Activated B cell treated with CpG ODN at 0.5 μM for 24 hours (primary cell): ENCODE measurements at regions of chr4 and their contacts with region 1.

Region 1: DNA sequence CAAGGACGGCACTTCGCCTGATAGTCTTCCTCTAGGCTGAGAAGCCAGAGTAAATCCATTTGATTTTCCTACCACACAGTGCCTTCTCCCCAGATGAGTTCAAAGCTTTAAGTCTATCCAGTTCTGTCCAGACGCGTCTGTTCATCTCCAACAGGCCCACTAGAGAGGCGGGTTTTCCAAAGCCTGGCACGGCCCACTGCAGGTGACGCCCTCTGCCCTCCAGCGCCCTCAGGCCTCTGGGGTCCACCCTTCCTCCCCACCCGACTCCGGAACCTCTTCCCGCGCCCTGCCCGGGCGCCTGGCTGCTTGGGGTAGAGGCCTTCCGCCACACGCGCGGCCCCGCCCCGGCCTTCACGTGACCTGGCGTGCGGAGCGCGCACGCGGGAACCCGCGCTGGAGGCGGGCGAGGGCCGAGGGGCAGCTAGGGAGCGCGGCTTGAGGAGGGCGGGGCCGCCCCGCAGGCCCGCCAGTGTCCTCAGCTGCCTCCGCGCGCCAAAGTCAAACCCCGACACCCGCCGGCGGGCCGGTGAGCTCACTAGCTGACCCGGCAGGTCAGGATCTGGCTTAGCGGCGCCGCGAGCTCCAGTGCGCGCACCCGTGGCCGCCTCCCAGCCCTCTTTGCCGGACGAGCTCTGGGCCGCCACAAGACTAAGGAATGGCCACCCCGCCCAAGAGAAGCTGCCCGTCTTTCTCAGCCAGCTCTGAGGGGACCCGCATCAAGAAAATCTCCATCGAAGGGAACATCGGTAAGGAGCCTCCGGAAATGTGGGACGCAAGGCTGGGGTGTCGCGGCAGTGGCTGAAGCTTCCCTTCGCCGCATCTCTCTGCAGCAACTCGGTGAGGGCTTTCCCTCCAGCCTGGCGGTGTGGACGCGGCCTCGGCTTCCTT is at the start of gene DCK:
- DNase-seq: peak; percentile 91
- ATAC-seq: peak; percentile 81
- H3K4me3 Mint-ChIP-seq: peak within 1 kb of the TSS; percentile 94
- H3K27ac Mint-ChIP-seq: peak within 1 kb of the TSS; percentile 94
- H3K4me1 Mint-ChIP-seq: peaks cover 55% of the 10 kb centered on the region
- H3K27me3 Mint-ChIP-seq: no peaks in the 10 kb centered on the region
- CTCF ChIP-seq: no peak
- total RNA-seq, gene DCK: 32.6 and 34.3 TPM in 2 replicates

Region 2: DNA sequence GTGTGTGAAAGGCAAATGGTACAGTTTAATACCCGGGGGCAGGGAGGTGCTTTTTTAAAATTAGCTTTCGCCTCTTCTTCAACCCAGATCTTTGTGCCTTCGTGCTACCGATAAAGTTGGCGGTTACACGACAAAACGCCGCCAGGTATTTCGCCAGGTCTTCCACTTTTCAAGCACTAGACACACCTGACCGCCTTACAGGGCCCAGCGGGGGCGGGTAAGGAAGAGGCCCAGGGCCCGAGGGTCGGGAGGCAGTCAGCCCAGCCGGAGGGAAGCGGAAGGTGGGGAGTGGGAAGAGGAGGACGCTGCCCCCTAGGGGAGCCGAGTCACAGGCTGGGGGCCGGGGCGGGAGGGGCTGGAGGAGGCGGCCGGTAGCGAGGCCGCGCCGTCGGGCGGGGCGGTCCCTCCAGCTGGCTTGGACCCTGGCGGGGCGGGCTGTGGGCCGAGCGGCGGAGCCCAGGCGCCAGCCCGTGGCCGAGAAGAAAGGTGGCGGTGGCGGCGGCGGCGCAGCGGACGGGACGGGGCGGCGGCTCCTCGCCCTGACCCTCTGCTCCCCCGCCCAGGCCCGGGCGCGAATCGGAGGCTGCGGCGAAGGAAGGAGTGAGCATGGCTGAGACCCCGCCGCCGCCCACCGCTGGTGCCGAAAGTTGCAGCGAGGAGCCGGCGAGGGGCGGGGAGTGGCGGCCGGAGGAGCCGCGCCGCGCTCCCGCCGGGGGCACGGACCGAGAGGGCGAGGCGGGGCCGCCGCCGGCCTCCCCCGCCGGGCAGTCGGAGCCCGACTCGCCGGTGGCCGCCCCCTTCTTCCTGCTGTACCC is 288.9 kb before region 1 on chr4:
- CTCF ChIA-PET with region 1: interaction called, 3 read pairs
- POLR2A ChIA-PET with region 1: interaction called, 20 read pairs
- intact Hi-C with region 1: loop called (anchors 2 kb)
- DNase-seq: peak; percentile 69
- ATAC-seq: peak; percentile 67
- H3K4me3 Mint-ChIP-seq: peak overlapping the region; percentile 93
- H3K27ac Mint-ChIP-seq: peak overlapping the region; percentile 89
- H3K4me1 Mint-ChIP-seq: peaks cover 34% of the 10 kb centered on the region
- H3K27me3 Mint-ChIP-seq: no peaks in the 10 kb centered on the region
- CTCF ChIP-seq: no peak

Region 3: GRCh38 chr4:70943114-70943513 is 50.3 kb before region 1 on chr4:
- CTCF ChIA-PET with region 1: no interaction called
- POLR2A ChIA-PET with region 1: interaction called, 14 read pairs
- intact Hi-C with region 1: loop called (anchors 5 kb)
- DNase-seq: no peak
- ATAC-seq: peak; percentile 78
- H3K4me3 Mint-ChIP-seq: no peak overlapping the region
- H3K27ac Mint-ChIP-seq: peak overlapping the region; percentile 59
- H3K4me1 Mint-ChIP-seq: peaks cover 37% of the 10 kb centered on the region
- H3K27me3 Mint-ChIP-seq: no peaks in the 10 kb centered on the region
- CTCF ChIP-seq: no peak

Region 4: GRCh38 chr4:71004281-71004851 is 10.9 kb after region 1 on chr4:
- CTCF ChIA-PET with region 1: interaction called, 86 read pairs
- POLR2A ChIA-PET with region 1: interaction called, 203 read pairs
- intact Hi-C with region 1: loop called (anchors 1 kb)
- DNase-seq: peak; percentile 52
- ATAC-seq: peak; percentile 63
- H3K4me3 Mint-ChIP-seq: peak overlapping the region; percentile 75
- H3K27ac Mint-ChIP-seq: peak overlapping the region; percentile 84
- H3K4me1 Mint-ChIP-seq: peaks cover 95% of the 10 kb centered on the region
- H3K27me3 Mint-ChIP-seq: no peaks in the 10 kb centered on the region
- CTCF ChIP-seq: no peak

Region 5: GRCh38 chr4:71141125-71141524 is 147.7 kb after region 1 on chr4:
- CTCF ChIA-PET with region 1: no interaction called
- POLR2A ChIA-PET with region 1: no interaction called
- intact Hi-C with region 1: no loop called
- DNase-seq: no peak
- ATAC-seq: no peak
- H3K4me3 Mint-ChIP-seq: no peak overlapping the region
- H3K27ac Mint-ChIP-seq: no peak overlapping the region
- H3K4me1 Mint-ChIP-seq: no peaks in the 10 kb centered on the region
- H3K27me3 Mint-ChIP-seq: no peaks in the 10 kb centered on the region
- CTCF ChIP-seq: no peak

Region 6: GRCh38 chr4:71184195-71184781 is 190.9 kb after region 1 on chr4:
- CTCF ChIA-PET with region 1: no interaction called
- POLR2A ChIA-PET with region 1: no interaction called
- intact Hi-C with region 1: loop called (anchors 10 kb)
- DNase-seq: no peak
- ATAC-seq: peak; percentile 55
- H3K4me3 Mint-ChIP-seq: peak overlapping the region; percentile 33
- H3K27ac Mint-ChIP-seq: no peak overlapping the region
- H3K4me1 Mint-ChIP-seq: peaks cover 24% of the 10 kb centered on the region
- H3K27me3 Mint-ChIP-seq: peaks cover 30% of the 10 kb centered on the region
- CTCF ChIP-seq: no peak

Region 7: GRCh38 chr4:71570492-71570891 is 577.1 kb after region 1 on chr4:
- CTCF ChIA-PET with region 1: no interaction called
- POLR2A ChIA-PET with region 1: no interaction called
- intact Hi-C with region 1: no loop called
- DNase-seq: no peak
- ATAC-seq: no peak
- H3K4me3 Mint-ChIP-seq: no peak overlapping the region
- H3K27ac Mint-ChIP-seq: no peak overlapping the region
- H3K4me1 Mint-ChIP-seq: no peaks in the 10 kb centered on the region
- H3K27me3 Mint-ChIP-seq: no peaks in the 10 kb centered on the region
- CTCF ChIP-seq: no peak